A549 (cell line): ENCODE measurements at regions of chr5 and their contacts with region 1.

Region 1: DNA sequence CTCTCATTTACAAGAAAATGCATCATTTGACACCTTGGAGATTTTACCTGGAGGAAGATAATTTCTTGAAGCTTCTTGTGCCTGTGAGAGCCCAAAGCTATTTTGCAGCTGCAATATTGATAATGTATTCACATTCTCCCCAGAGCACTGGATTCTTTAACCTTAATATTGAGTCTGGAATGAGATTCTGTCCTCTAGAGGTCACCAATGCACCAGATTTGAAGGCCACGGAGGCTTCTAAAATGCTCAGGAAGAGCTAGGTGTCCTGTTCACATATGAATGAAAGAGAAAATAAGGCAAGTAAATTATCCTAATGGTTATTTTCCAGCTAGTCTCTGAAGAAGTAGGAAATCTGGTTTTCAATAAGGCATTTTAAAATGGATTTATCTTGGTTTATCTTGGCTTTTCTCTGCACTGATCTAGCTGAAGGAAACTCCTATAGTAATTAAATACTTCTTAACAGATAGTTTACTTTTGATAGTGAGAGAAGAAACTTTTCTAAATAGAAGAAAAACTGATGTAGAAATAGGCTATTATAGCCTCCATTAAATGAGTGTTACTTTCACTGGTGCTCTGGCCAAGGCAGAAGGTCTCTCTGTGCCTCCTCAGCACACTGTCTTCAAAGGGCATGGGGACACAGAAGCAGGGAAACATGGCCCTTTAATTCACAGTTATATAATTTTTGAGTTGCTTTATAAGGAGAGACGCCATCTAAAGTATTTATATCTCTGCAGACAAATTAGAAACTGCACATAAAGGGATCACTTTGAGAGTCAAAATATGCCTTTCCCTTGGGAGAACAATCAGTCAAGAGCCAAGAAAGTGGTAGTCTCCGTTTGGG is 297.0 kb upstream of the ACTBL2 start:
- DNase-seq: peak; percentile 35 to 73
- ATAC-seq: peak; percentile 72 to 90; a peak in 4 of 6 replicates
- H3K4me3 ChIP-seq: no peak overlapping the region
- H3K27ac ChIP-seq: peak overlapping the region; percentile 29 to 74; a peak in 5 of 6 replicates
- H3K4me1 ChIP-seq: peaks cover 53% of the 10 kb centered on the region
- CTCF ChIP-seq: peak; percentile 89
- EP300 ChIP-seq: no peak
- POLR2A ChIP-seq: no peak
- RAD21 ChIP-seq: peak; percentile 96

Region 2: GRCh38 chr5:57298295-57298984 is 481.2 kb before region 1 on chr5:
- CTCF ChIA-PET with region 1: interaction called, 40 read pairs
- POLR2A ChIA-PET with region 1: interaction called, 5 read pairs
- DNase-seq: peak; percentile 55 to 85
- ATAC-seq: peak; percentile 92
- H3K4me3 ChIP-seq: no peak overlapping the region
- H3K27ac ChIP-seq: peak overlapping the region; percentile 35 to 68; a peak in 4 of 6 replicates
- H3K4me1 ChIP-seq: peaks cover 18% of the 10 kb centered on the region
- CTCF ChIP-seq: peak; percentile 86
- EP300 ChIP-seq: no peak
- POLR2A ChIP-seq: no peak
- RAD21 ChIP-seq: peak; percentile 92 to 93

Region 3: DNA sequence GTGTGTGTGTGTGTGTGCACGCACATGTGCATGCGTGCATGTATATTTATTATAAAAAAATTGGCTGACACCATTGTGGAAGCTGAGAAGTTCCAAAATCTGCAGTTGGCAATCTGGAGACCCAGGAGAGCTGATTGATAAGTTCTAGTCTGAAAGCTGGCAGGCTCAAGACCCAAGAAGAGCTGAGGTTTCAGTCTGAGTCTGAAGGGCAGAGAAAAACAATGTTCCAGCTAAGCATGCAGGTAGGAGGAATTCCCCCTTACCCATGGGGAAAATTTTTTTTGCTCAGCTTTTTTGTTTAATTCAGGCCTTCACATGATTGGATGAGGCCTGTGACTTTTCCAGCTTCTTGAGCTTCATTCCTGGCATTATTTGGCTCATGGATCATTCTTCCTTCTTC is 265.8 kb before region 1 on chr5:
- CTCF ChIA-PET with region 1: interaction called, 11 read pairs
- POLR2A ChIA-PET with region 1: no interaction called
- DNase-seq: no peak
- ATAC-seq: no peak
- H3K4me3 ChIP-seq: no peak overlapping the region
- H3K27ac ChIP-seq: no peak overlapping the region
- H3K4me1 ChIP-seq: no peaks in the 10 kb centered on the region
- CTCF ChIP-seq: no peak
- EP300 ChIP-seq: no peak
- POLR2A ChIP-seq: no peak
- RAD21 ChIP-seq: no peak

Region 4: DNA sequence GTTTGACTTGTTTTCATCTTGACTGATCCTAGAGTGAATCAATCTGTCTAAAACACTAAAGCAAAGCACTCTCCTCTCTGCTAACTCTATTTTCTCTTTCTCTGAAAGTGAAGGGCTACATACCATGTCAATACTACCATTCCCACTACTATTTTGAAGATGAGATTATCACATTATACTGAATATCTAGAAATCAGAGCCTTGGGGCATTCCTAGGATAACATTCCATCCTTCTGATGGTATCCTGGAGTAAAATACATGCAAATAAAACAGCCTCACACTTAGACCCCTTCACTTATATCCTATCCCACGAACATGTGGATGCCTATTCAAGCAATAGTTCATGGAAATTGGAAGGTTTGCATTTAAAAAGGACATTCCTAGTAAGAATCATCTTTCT is 12.3 kb after region 1 on chr5:
- CTCF ChIA-PET with region 1: interaction called, 17 read pairs
- POLR2A ChIA-PET with region 1: no interaction called
- DNase-seq: no peak
- ATAC-seq: no peak
- H3K4me3 ChIP-seq: no peak overlapping the region
- H3K27ac ChIP-seq: no peak overlapping the region
- H3K4me1 ChIP-seq: no peaks in the 10 kb centered on the region
- CTCF ChIP-seq: no peak
- EP300 ChIP-seq: no peak
- POLR2A ChIP-seq: no peak
- RAD21 ChIP-seq: no peak

Region 5: GRCh38 chr5:57887851-57888621 is 108.4 kb after region 1 on chr5:
- CTCF ChIA-PET with region 1: interaction called, 64 read pairs
- POLR2A ChIA-PET with region 1: interaction called, 7 read pairs
- DNase-seq: peak; percentile 70 to 85
- ATAC-seq: peak; percentile 95 to 97
- H3K4me3 ChIP-seq: no peak overlapping the region
- H3K27ac ChIP-seq: peak overlapping the region; percentile 71 to 86
- H3K4me1 ChIP-seq: peaks cover 36% of the 10 kb centered on the region
- CTCF ChIP-seq: peak; percentile 80
- EP300 ChIP-seq: no peak
- POLR2A ChIP-seq: no peak
- RAD21 ChIP-seq: peak; percentile 94 to 97

Region 6: GRCh38 chr5:58106754-58107410 is 327.3 kb after region 1 on chr5:
- CTCF ChIA-PET with region 1: no interaction called
- POLR2A ChIA-PET with region 1: no interaction called
- DNase-seq: no peak
- ATAC-seq: no peak
- H3K4me3 ChIP-seq: no peak overlapping the region
- H3K27ac ChIP-seq: no peak overlapping the region
- H3K4me1 ChIP-seq: no peaks in the 10 kb centered on the region
- CTCF ChIP-seq: no peak
- EP300 ChIP-seq: no peak
- POLR2A ChIP-seq: no peak
- RAD21 ChIP-seq: no peak

Region 7: DNA sequence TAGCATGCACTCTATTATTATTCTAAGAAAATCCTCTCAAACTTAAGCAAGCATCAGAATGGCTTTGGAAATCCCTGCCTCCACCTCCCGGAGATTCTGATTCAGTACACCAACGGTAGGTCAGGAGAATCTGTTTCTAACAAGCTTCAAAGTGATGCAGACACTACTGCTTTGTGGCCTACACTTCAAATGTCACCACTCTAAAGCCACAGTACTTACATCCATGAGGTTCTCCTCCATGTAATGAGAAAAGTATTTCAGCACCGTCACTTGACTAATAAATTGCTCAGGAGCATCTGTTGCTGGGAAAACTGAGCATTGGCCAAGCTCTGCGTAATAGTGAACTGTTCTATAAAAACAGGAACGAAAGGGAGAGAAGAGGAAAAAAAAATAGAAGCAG is 675.5 kb after region 1 on chr5:
- CTCF ChIA-PET with region 1: interaction called, 149 read pairs
- POLR2A ChIA-PET with region 1: interaction called, 35 read pairs
- DNase-seq: no peak
- ATAC-seq: no peak
- H3K4me3 ChIP-seq: peak overlapping the region; percentile 91
- H3K27ac ChIP-seq: peak overlapping the region; percentile 96 to 100
- H3K4me1 ChIP-seq: peaks cover 38% of the 10 kb centered on the region
- CTCF ChIP-seq: no peak
- EP300 ChIP-seq: no peak
- POLR2A ChIP-seq: no peak
- RAD21 ChIP-seq: no peak